OCI-LY7 (cell line): ENCODE measurements at regions of chr3 and their contacts with region 1.

Region 1: GRCh38 chr3:50227390-50228183 is 8.4 kb upstream of the GNAI2 start:
- DNase-seq: peak; percentile 96
- H3K4me3 ChIP-seq: peak overlapping the region; percentile 90
- H3K27ac ChIP-seq: peak overlapping the region; percentile 60
- H3K4me1 ChIP-seq: peaks cover 45% of the 10 kb centered on the region
- CTCF ChIP-seq: peak; percentile 81

Region 2: DNA sequence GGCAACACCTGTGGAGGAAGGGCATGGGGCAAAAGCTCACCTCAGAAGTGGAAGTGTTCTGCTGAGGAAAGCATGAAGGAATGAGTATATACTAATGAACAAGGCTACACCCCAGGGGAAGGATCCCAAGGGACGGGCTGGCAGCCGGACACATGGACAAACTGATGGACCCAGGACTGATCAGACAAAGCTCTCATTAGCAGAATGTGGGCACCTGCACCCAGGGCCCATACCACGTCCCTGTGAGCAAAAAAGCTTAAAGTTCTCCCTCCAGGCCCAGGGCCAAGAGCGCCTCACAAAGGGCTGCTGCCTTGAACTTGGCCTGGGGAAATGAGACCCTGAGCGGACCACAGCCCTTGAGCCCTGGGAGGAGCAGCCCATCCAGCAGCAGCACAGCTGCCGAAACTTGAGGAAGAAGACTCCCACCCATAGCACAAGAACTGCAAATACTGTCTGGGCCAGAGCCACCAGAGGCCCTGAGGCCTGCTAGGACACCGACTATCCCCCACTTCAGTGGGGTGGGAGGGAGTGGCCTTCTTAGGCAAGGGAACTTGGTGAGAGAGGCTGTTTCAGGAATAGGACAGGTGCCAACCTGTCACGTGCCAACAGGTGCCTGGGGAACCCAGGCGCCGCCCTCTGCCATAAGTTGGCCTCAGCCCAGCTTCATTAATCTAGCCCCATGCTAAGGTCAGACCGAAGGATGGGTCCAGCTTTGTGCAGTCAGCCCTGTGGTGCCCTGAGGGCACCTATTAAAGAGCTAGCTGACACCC is 501.5 kb before region 1 on chr3:
- CTCF ChIA-PET with region 1: no interaction called
- POLR2A ChIA-PET with region 1: no interaction called
- intact Hi-C with region 1: no loop called
- DNase-seq: no peak
- H3K4me3 ChIP-seq: no peak overlapping the region
- H3K27ac ChIP-seq: peak overlapping the region; percentile 78
- H3K4me1 ChIP-seq: peaks cover 45% of the 10 kb centered on the region
- CTCF ChIP-seq: no peak

Region 3: DNA sequence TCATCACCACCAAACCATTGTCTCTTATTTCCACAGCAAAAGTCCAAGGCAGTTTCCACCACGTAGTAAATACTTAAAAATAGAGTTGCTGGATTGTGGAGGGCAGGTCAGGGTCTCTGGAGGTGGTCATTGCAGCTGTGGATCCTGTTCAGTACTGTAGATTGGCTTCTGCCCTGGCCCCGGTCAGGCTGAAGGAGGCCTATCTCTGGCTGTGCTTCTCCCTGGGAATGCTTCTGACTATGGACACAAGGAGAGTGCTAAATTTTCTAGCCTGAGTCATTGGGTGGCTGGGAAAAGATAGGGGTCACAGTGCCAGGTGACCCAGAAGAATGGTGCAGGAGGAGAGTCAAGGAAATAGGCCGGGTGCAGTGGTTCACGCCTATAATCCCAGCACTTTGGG is 477.5 kb before region 1 on chr3:
- CTCF ChIA-PET with region 1: no interaction called
- POLR2A ChIA-PET with region 1: no interaction called
- intact Hi-C with region 1: no loop called
- DNase-seq: no peak
- H3K4me3 ChIP-seq: no peak overlapping the region
- H3K27ac ChIP-seq: no peak overlapping the region
- H3K4me1 ChIP-seq: no peaks in the 10 kb centered on the region
- CTCF ChIP-seq: no peak

Region 4: DNA sequence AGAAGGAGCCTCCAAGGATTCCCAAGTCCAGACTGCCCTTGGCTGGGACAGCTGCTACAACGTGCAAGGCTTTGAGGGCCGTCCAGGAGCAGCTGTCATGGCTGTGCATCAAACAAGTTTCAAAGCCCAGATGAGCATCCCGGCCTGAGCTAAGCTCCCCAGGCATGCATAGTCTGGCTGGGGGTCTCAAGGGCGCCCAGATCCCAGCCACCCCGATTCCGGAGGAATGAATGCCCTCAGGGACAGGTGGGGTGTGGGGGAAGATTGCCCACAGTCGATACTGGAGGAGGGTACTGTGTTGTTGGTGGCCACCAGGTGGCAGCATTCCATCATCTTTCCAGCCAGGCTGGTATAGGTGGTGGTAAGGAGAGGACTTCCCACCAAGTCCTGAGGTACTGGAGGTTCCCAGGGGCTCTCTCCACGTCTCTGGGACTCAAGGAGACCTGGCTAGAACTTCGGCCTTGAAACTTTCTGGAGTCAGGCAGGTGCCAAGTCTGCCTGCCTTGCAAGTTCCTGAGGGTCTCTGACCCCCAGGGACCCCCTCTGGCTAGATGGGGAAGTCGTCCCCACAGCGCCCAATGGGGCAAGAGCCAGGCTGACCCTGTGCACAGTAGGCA is 106.1 kb before region 1 on chr3:
- CTCF ChIA-PET with region 1: no interaction called
- POLR2A ChIA-PET with region 1: no interaction called
- intact Hi-C with region 1: loop called (anchors 1 kb)
- DNase-seq: peak; percentile 78
- H3K4me3 ChIP-seq: no peak overlapping the region
- H3K27ac ChIP-seq: no peak overlapping the region
- H3K4me1 ChIP-seq: no peaks in the 10 kb centered on the region
- CTCF ChIP-seq: peak; percentile 90

Region 5: GRCh38 chr3:50245831-50246516 is 18.4 kb after region 1 on chr3:
- CTCF ChIA-PET with region 1: interaction called, 20 read pairs
- POLR2A ChIA-PET with region 1: interaction called, 24 read pairs
- intact Hi-C with region 1: loop called (anchors 1 kb)
- DNase-seq: peak; percentile 89
- H3K4me3 ChIP-seq: peak overlapping the region; percentile 64
- H3K27ac ChIP-seq: peak overlapping the region; percentile 79
- H3K4me1 ChIP-seq: peaks cover 67% of the 10 kb centered on the region
- CTCF ChIP-seq: peak; percentile 97

Region 6: DNA sequence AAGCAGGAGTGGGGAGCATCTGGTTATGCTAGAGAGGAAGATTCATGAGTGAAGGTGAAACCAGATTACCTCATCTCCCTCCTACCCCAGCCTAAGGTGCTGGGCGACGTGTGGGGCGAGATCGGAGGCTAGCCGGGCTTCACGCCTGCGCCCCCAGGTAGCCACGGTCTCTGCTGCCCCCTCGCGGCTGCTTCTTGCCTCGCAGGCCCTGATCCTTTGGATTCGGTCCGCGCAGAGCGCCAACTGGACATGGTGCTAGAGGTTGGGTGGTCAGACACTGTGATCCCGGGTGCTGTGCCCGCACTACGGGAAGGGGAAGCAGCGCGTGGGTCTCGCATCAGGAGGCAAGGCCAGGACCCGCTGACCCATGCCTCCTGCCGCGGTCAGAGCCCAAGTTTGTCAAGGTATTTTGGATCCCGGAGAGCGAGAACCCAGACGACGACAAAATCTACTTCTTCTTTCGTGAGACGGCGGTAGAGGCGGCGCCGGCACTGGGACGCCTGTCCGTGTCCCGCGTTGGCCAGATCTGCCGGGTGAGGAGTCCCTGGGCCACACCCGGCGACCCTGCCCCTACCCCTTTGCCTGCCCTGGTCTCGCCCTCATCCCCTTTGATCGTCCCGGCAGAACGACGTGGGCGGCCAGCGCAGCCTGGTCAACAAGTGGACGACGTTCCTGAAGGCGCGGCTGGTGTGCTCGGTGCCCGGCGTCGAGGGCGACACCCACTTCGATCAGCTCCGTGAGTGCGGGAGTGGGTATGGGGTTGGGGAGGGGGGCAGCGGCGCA is 45.5 kb after region 1 on chr3:
- CTCF ChIA-PET with region 1: no interaction called
- POLR2A ChIA-PET with region 1: no interaction called
- intact Hi-C with region 1: loop called (anchors 1 kb)
- DNase-seq: peak; percentile 83
- H3K4me3 ChIP-seq: no peak overlapping the region
- H3K27ac ChIP-seq: no peak overlapping the region
- H3K4me1 ChIP-seq: peaks cover 5% of the 10 kb centered on the region
- CTCF ChIP-seq: peak; percentile 93